CD14-positive monocyte (primary cell): ENCODE measurements at regions of chr6 and their contacts with region 1.

Region 1: GRCh38 chr6:3707024-3707423 is 44.5 kb downstream of the PXDC1 start:
- DNase-seq: peak in 2 of 3 donors; percentile 0 to 28
- H3K4me3 ChIP-seq: no peak overlapping the region
- H3K4me3 Mint-ChIP-seq: no peak overlapping the region
- H3K27ac ChIP-seq: no peak overlapping the region
- H3K27ac Mint-ChIP-seq: no peak overlapping the region
- H3K4me1 ChIP-seq: peaks cover 0 to 3% of the 10 kb centered on the region in 2 donors
- H3K4me1 Mint-ChIP-seq: peaks cover 5% of the 10 kb centered on the region
- H3K27me3 ChIP-seq: no peaks in the 10 kb centered on the region
- H3K27me3 Mint-ChIP-seq: peaks cover 0 to 4% (median 2%) of the 10 kb centered on the region in 3 donors
- CTCF ChIP-seq: no peak

Region 2: DNA sequence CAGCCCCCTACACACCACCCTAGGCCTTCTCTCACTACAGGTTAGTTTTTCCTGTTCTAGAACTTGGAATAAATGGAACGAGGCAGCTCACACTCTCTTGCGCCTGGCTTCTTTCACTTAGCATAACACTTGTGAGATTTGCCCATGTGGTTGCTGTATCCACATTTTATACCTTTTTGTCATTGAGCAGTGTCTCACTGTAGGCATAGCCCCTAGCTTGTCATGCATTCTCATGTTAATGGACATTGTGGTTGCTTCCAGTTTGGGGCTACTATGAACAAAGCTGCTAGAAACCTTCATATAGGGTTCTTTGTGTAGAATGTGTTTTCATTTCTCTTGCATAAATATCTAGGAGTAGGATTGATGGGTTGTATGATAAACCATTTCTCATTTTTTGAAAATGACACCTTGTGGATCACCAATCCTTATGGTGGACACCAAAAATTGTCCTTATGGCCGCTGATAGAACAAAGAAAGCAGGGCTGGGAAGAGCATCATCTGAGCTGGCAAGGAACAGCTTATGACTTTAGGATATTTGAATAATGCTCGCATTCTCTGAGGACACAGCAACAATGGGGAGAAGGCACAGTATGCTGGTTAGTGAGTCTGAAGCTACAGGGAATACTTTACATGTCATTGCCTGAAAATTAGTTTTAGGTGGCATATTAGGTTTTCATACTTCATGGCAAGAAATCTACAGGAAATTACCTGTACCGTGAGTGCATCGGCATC is 240.4 kb before region 1 on chr6:
- intact Hi-C with region 1: loop called in 1 of 2 experiments (anchors 10 kb)
- DNase-seq: no peak
- H3K4me3 ChIP-seq: no peak overlapping the region
- H3K4me3 Mint-ChIP-seq: no peak overlapping the region
- H3K27ac ChIP-seq: no peak overlapping the region
- H3K27ac Mint-ChIP-seq: no peak overlapping the region
- H3K4me1 ChIP-seq: no peaks in the 10 kb centered on the region
- H3K4me1 Mint-ChIP-seq: no peaks in the 10 kb centered on the region
- H3K27me3 ChIP-seq: peaks cover 7 to 8% of the 10 kb centered on the region in 2 donors
- H3K27me3 Mint-ChIP-seq: peaks cover 5 to 15% (median 8%) of the 10 kb centered on the region in 3 donors
- CTCF ChIP-seq: no peak